HepG2 (cell line): ENCODE measurements at regions of chr17 and their contacts with region 1.

Region 1: DNA sequence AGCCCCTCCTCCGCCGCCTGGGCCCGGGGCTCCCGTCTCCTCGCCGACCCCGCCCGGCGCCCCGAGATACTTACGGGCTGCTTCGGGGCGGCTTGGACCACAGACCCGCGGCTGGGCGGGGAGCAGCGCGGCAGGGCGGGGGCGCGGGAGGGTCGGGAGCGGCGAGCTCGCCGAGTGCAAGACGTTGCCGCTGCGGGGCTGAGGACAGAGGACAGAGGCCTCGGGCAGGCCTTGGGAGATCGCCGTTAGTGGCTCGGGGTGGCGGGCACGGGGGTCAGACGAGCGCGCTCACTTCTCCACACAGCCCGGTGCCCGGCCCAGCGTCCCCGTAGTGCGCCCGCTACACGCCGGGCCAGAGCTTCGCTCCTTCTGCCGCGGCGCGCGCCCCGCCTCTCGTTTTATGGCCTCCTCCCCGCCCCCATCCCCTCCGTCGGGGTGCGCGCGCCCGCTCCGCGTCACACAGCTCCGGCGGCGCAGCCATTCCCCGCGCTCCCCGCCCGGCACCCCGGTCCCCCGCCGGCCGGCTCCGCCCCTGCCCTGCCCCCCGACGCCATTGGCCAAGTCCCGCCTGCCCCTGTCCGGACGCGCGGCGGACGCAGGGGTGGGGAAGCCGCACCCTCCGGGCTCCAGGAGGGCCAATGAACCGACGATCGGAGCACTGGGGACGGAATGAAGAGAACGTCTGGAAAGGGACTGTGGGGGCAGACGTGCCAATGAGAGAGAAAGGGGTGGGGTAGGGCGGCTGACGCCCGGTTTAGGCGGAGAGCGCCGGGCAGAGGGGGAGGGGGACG is at the start of gene TOB1:
- DNase-seq: peak; percentile 97
- ATAC-seq: peak; percentile 91
- H3K4me3 ChIP-seq: peak within 1 kb of the TSS; percentile 97 to 98 (median 97)
- H3K27ac ChIP-seq: peak within 1 kb of the TSS; percentile 95
- H3K4me1 ChIP-seq: peaks cover 41% of the 10 kb centered on the region
- H3K27me3 ChIP-seq: no peaks in the 10 kb centered on the region; a peak in 1 of 5 replicates
- CTCF ChIP-seq: 0 out of 2 replicates have a peak, but pooled peaks have one; percentile 18
- EP300 ChIP-seq: peak; percentile 56 to 63
- POLR2A ChIP-seq: peak; percentile 99 to 100
- RAD21 ChIP-seq: peak; percentile 87
- total RNA-seq, gene TOB1: 19.4 and 21.9 TPM in 2 replicates

Region 2: DNA sequence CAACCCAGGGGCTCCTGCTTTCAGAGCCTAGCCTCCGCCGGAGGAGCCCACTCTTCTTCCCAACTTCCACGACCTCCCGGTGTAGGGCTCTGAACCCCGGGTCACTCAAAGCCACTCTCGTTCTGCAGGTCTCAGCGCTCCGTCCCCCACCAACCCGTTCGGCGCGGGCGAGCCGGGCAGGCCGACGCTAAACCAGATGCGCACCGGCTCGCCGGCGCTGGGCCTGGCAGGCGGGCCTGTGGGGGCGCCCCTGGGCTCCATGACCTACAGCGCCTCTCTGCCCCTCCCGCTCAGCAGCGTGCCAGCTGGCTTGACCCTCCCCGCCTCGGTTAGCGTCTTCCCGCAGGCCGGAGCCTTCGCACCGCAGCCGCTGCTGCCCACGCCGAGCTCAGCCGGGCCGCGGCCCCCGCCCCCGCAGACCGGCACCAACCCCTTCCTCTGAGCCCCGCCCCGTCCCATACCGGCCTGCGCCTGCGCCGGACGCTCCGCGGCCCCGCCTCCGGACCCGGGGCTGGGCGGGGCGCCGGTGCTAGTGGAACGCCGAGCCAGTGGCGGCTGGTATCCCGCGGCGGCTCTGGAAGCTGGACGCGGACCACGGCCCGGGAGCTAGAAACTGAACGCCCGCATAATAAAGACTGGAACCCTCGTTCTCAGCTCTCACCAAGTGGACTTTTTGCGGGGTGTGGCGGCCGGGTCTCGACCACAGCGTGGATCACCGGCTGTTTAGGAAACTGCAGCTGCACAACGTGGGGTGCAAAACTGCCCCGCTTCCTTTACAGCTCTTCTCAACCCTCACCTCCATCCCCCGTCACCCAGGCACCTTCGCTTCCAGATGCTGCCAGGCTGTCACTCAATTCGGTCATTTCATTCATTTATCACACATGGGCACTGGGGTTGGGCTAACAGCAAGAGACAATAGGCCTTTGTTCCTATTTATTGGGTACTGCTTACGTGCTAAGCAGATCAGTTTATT is 324.2 kb before region 1 on chr17:
- CTCF ChIA-PET with region 1: no interaction called
- POLR2A ChIA-PET with region 1: interaction called, 26 read pairs
- in situ Hi-C with region 1: no loop called
- intact Hi-C with region 1: no loop called
- DNase-seq: peak; percentile 81
- ATAC-seq: peak; percentile 69
- H3K4me3 ChIP-seq: peak overlapping the region; percentile 73 to 87 (median 78)
- H3K27ac ChIP-seq: peak overlapping the region; percentile 97
- H3K4me1 ChIP-seq: peaks cover 80% of the 10 kb centered on the region
- H3K27me3 ChIP-seq: no peaks in the 10 kb centered on the region; a peak in 1 of 5 replicates
- CTCF ChIP-seq: peak; percentile 54; the same call in 1 of the 2 replicates
- EP300 ChIP-seq: 0 out of 4 replicates have a peak, but pooled peaks of 1 of the 2 experiments have one; percentile 5
- POLR2A ChIP-seq: peak; percentile 90
- RAD21 ChIP-seq: peak; percentile 69; the same call in 1 of the 2 replicates

Region 3: DNA sequence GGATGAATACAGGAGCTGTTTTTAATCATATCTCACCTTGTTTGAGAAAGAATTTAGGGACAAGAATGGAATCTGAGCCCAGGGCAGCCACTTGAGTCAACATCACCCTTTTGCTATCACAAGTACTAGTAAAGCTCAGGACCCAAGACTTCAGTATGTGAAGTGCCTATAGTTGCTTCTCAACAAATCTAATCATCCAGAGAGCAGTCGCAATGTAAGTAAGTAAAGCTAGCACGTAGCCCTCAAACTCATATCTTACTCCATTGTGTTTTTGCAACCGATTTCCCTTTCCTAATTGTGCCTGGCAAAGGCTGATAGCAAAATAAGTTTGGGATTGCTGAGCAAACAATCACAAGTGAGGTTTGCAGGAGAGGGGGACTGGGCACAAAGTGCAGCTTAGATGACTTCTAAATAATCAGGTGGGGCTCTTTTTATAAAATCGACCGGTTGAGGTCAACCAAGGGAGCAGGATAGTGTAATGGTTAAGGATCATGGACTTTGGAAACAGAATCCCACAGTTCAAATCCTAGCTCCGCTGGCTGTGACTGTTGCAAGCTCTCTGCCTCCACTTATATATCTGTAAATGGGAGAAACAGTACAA is 13.1 kb before region 1 on chr17:
- CTCF ChIA-PET with region 1: no interaction called
- POLR2A ChIA-PET with region 1: interaction called, 333 read pairs
- in situ Hi-C with region 1: no loop called
- intact Hi-C with region 1: loop called (anchors 1 kb)
- DNase-seq: peak; percentile 74
- ATAC-seq: peak; percentile 46
- H3K4me3 ChIP-seq: peak overlapping the region; percentile 29 to 64 (median 56); a peak in 5 of 6 replicates
- H3K27ac ChIP-seq: peak overlapping the region; percentile 49
- H3K4me1 ChIP-seq: peaks cover 76% of the 10 kb centered on the region
- H3K27me3 ChIP-seq: peaks cover 0 to 8% of the 10 kb centered on the region in 2 experiments; a peak in 2 of 5 replicates
- CTCF ChIP-seq: no peak
- EP300 ChIP-seq: peak in 1 of 2 experiments; percentile 77; a peak in 2 of 4 replicates
- POLR2A ChIP-seq: no peak
- RAD21 ChIP-seq: no peak

Region 4: GRCh38 chr17:50904521-50905459 is 38.6 kb after region 1 on chr17:
- CTCF ChIA-PET with region 1: interaction called, 10 read pairs
- POLR2A ChIA-PET with region 1: interaction called, 343 read pairs
- in situ Hi-C with region 1: no loop called
- intact Hi-C with region 1: loop called (anchors 2 kb)
- DNase-seq: peak; percentile 78
- ATAC-seq: peak; percentile 74
- H3K4me3 ChIP-seq: peak overlapping the region; percentile 48 to 76 (median 52)
- H3K27ac ChIP-seq: peak overlapping the region; percentile 93
- H3K4me1 ChIP-seq: peaks cover 93% of the 10 kb centered on the region
- H3K27me3 ChIP-seq: no peaks in the 10 kb centered on the region
- CTCF ChIP-seq: peak; percentile 51
- EP300 ChIP-seq: peak in 1 of 2 experiments; percentile 58; a peak in 2 of 4 replicates
- POLR2A ChIP-seq: peak in 1 of 2 experiments; percentile 62; a peak in 1 of 4 replicates
- RAD21 ChIP-seq: peak; percentile 31; the same call in 1 of the 2 replicates

Region 5: DNA sequence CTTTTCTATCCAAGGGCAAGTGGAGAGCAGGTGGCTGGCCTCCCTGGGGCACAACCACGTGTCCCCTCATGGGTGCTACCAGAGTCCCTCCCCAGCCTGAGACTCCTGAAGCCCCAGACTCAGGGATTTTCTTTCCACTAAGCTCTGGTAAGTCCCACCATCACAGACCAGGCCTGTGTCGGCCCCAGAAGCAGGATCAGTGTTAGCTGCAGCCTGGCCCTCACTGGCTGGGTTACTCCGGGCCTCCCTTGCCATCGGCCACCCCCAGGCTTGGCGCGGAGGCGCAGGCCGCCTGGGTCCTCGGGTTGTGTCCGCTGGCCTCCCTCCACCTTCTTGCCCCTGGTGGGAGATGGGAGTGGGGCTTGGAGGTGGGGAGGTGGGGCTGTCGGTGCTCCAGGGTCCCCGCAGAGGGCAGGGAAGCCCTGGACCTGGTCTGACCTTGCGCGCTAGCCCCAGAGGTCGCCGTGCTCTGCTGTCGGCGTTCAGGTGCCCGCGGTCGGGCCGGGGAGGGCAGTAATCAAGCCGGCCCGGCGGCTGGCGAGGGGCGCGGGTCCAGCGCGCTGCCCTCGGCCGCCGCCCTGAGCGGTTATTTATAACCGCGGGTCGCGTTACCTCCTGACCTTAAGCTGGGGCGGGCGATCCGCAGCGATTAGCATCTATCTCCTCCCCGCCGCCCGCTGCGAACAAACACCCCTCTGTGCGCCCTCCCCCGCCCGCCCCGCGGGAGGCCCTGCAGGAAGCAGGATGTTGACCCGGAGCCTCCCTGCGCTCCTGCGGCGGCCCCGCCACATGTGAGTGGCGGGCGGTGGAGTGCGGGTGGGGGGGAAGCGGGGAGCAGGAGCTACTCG is 78.1 kb after region 1 on chr17:
- CTCF ChIA-PET with region 1: interaction called, 19 read pairs
- POLR2A ChIA-PET with region 1: interaction called, 510 read pairs
- in situ Hi-C with region 1: loop called (anchors 5 kb)
- intact Hi-C with region 1: loop called (anchors 1 kb)
- DNase-seq: peak; percentile 97
- ATAC-seq: peak; percentile 85
- H3K4me3 ChIP-seq: peak overlapping the region; percentile 61 to 86 (median 73)
- H3K27ac ChIP-seq: peak overlapping the region; percentile 96
- H3K4me1 ChIP-seq: peaks cover 97% of the 10 kb centered on the region
- H3K27me3 ChIP-seq: no peaks in the 10 kb centered on the region
- CTCF ChIP-seq: peak; percentile 27
- EP300 ChIP-seq: peak; percentile 71 to 96; a peak in 2 of 4 replicates
- POLR2A ChIP-seq: peak; percentile 98 to 99
- RAD21 ChIP-seq: peak; percentile 80

Region 6: DNA sequence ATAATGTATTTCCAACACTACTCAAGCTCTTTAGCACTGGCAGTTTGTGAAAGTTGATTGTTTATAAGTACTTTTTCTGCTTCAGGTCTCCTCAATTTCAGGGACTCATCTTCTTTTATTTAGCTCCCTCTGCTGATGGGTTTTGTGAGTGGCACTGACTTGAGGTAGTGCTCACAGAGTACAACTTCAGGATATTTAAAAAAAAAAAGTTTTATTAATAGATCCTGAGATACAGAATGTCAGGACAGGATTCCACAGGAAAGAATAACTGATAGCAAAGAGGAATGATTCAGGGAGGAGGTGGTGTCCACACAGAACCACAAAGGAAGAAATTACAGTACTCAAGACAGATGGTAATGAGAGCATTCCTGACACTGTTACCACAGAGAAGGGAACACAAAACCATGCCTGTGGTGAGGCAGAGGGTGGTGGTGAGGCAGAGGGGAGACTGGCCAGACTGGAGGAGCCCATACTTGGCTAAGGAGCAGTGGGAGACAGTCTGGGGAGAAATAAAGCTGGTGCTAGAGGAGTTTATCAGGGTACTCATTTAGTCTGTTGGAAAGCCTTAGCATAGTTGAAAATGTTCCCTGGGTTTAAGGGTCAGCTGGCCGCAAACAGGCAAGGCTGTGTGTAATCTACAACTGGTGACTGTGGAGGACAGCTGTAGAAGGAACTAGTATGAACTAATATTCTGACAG is 190.8 kb after region 1 on chr17:
- CTCF ChIA-PET with region 1: no interaction called
- POLR2A ChIA-PET with region 1: no interaction called
- in situ Hi-C with region 1: no loop called
- intact Hi-C with region 1: loop called (anchors 5 kb)
- DNase-seq: peak; percentile 68
- ATAC-seq: peak; percentile 98
- H3K4me3 ChIP-seq: peak overlapping the region in 1 of 3 experiments; percentile 32; a peak in 1 of 6 replicates
- H3K27ac ChIP-seq: peak overlapping the region; percentile 64
- H3K4me1 ChIP-seq: peaks cover 22% of the 10 kb centered on the region
- H3K27me3 ChIP-seq: no peaks in the 10 kb centered on the region
- CTCF ChIP-seq: peak; percentile 69
- EP300 ChIP-seq: no peak
- POLR2A ChIP-seq: no peak
- RAD21 ChIP-seq: no peak